ENCODE measurements at regions of chr9 and their contacts with region 1.

Region 1: GRCh38 chr9:95715868-95716435 is 159.5 kb upstream of the ERCC6L2 start:
- DNase-seq: no peak
- H3K4me3 ChIP-seq: no peak overlapping the region
- H3K27ac ChIP-seq: no peak overlapping the region
- H3K4me1 ChIP-seq: no peaks in the 10 kb centered on the region; a peak in 1 of 7 replicates
- H3K27me3 ChIP-seq: no peaks in the 10 kb centered on the region
- CTCF ChIP-seq: no peak
- EP300 ChIP-seq: no peak
- POLR2A ChIP-seq: no peak
- RAD21 ChIP-seq: no peak

Region 2: GRCh38 chr9:95726756-95727155 is 10.8 kb after region 1 on chr9:
- CTCF ChIA-PET with region 1: interaction called, 15 read pairs
- POLR2A ChIA-PET with region 1: no interaction called
- DNase-seq: no peak
- H3K4me3 ChIP-seq: no peak overlapping the region
- H3K27ac ChIP-seq: no peak overlapping the region
- H3K4me1 ChIP-seq: no peaks in the 10 kb centered on the region
- H3K27me3 ChIP-seq: no peaks in the 10 kb centered on the region
- CTCF ChIP-seq: peak in 2 of 3 experiments; percentile 28 to 59; a peak in 2 of 4 replicates
- EP300 ChIP-seq: no peak
- POLR2A ChIP-seq: no peak
- RAD21 ChIP-seq: peak; percentile 55 to 66

Region 3: GRCh38 chr9:95736370-95736769 is 20.4 kb after region 1 on chr9:
- CTCF ChIA-PET with region 1: interaction called, 14 read pairs
- POLR2A ChIA-PET with region 1: no interaction called
- DNase-seq: no peak
- H3K4me3 ChIP-seq: no peak overlapping the region
- H3K27ac ChIP-seq: no peak overlapping the region
- H3K4me1 ChIP-seq: peaks cover 0 to 3% (median 0%) of the 10 kb centered on the region in 4 experiments; a peak in 2 of 7 replicates
- H3K27me3 ChIP-seq: no peaks in the 10 kb centered on the region
- CTCF ChIP-seq: peak; percentile 51 to 74 (median 55)
- EP300 ChIP-seq: no peak
- POLR2A ChIP-seq: no peak
- RAD21 ChIP-seq: peak; percentile 36 to 60

Region 4: GRCh38 chr9:95793924-95794828 is 78.2 kb after region 1 on chr9:
- CTCF ChIA-PET with region 1: no interaction called
- POLR2A ChIA-PET with region 1: no interaction called
- DNase-seq: no peak
- H3K4me3 ChIP-seq: no peak overlapping the region
- H3K27ac ChIP-seq: no peak overlapping the region
- H3K4me1 ChIP-seq: no peaks in the 10 kb centered on the region; a peak in 1 of 7 replicates
- H3K27me3 ChIP-seq: no peaks in the 10 kb centered on the region
- CTCF ChIP-seq: no peak
- EP300 ChIP-seq: no peak
- POLR2A ChIP-seq: no peak
- RAD21 ChIP-seq: no peak

Measured in H1 (cell line).